PC-9 (cell line): ENCODE measurements at regions of chr20 and their contacts with region 1.

Region 1: DNA sequence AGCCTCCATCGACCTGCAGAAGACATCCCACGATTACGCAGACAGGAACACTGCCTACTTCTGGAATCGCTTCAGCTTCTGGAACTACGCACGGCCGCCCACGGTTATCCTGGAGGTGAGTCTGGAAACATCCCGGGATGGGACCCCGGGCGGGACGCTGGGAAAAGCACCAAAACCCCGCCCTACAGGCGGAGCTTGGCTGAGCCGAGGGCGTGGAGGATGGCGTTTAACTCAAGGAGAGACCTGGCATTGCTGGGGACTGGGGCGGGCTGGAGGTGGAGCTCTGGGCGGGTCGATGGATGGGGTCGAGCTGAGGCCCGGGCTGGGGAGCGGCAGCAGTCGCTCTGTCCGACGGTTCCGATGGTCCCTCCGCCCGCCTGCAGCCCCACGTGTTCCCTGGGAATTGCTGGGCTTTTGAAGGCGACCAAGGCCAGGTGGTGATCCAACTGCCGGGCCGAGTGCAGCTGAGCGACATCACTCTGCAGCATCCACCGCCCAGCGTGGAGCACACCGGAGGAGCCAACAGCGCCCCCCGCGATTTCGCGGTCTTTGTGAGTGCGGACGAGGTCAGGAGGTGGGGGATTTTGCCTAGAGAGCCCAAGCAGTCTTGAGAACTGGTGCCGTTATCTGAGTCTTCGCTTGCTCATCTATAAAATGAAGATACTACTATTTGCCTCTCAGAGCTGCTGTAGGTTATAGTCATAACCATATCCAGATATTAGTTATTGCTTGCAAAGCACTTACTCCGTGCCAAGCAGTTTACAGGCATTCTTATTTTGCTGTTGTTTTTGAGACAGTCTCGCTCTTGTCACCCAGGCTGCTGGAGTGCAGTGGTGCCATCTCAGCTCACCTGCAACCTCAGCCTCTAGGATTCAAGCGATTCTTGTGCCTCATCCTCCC is 3.8 kb downstream of the SPAG4 start:
- DNase-seq: peak; percentile 73 to 92
- H3K4me3 ChIP-seq: peak overlapping the region; percentile 61
- H3K27ac ChIP-seq: no peak overlapping the region
- H3K4me1 ChIP-seq: peaks cover 22% of the 10 kb centered on the region
- H3K27me3 ChIP-seq: no peaks in the 10 kb centered on the region
- CTCF ChIP-seq: peak; percentile 65; the same call in 1 of the 2 replicates

Region 2: GRCh38 chr20:35511814-35512420 is 107.5 kb before region 1 on chr20:
- CTCF ChIA-PET with region 1: interaction called, 3 read pairs
- POLR2A ChIA-PET with region 1: no interaction called
- intact Hi-C with region 1: loop called (anchors 1 kb)
- DNase-seq: peak in 1 of 2 experiments; percentile 56
- H3K4me3 ChIP-seq: no peak overlapping the region
- H3K27ac ChIP-seq: no peak overlapping the region
- H3K4me1 ChIP-seq: peaks cover 28% of the 10 kb centered on the region
- H3K27me3 ChIP-seq: no peaks in the 10 kb centered on the region
- CTCF ChIP-seq: peak; percentile 86

Region 3: GRCh38 chr20:35568645-35569262 is 50.7 kb before region 1 on chr20:
- CTCF ChIA-PET with region 1: interaction called, 7 read pairs
- POLR2A ChIA-PET with region 1: interaction called, 11 read pairs
- intact Hi-C with region 1: loop called (anchors 2 kb)
- DNase-seq: peak; percentile 26 to 55
- H3K4me3 ChIP-seq: no peak overlapping the region
- H3K27ac ChIP-seq: no peak overlapping the region
- H3K4me1 ChIP-seq: no peaks in the 10 kb centered on the region
- H3K27me3 ChIP-seq: no peaks in the 10 kb centered on the region
- CTCF ChIP-seq: peak; percentile 56

Region 4: GRCh38 chr20:35607003-35607750 is 12.3 kb before region 1 on chr20:
- CTCF ChIA-PET with region 1: interaction called, 4 read pairs
- POLR2A ChIA-PET with region 1: interaction called, 24 read pairs
- intact Hi-C with region 1: no loop called
- DNase-seq: peak; percentile 88 to 90
- H3K4me3 ChIP-seq: peak overlapping the region; percentile 57; the same call in 1 of the 2 replicates
- H3K27ac ChIP-seq: peak overlapping the region; percentile 57
- H3K4me1 ChIP-seq: peaks cover 39% of the 10 kb centered on the region
- H3K27me3 ChIP-seq: no peaks in the 10 kb centered on the region
- CTCF ChIP-seq: no peak

Region 5: GRCh38 chr20:35664544-35665221 is 45.2 kb after region 1 on chr20 and contains the starts of genes CPNE1 and RBM12:
- CTCF ChIA-PET with region 1: interaction called, 4 read pairs
- POLR2A ChIA-PET with region 1: interaction called, 23 read pairs
- intact Hi-C with region 1: loop called (anchors 2 kb)
- DNase-seq: peak; percentile 80 to 94
- H3K4me3 ChIP-seq: peak within 1 kb of the TSS; percentile 99
- H3K27ac ChIP-seq: peak within 1 kb of the TSS; percentile 86
- H3K4me1 ChIP-seq: peaks cover 37% of the 10 kb centered on the region
- H3K27me3 ChIP-seq: no peaks in the 10 kb centered on the region
- CTCF ChIP-seq: no peak
- total RNA-seq, gene CPNE1: 271 and 311 TPM in 2 replicates
- total RNA-seq, gene RBM12: 46.9 and 81.2 TPM in 2 replicates

Region 6: GRCh38 chr20:35726759-35727711 is 107.6 kb after region 1 on chr20:
- CTCF ChIA-PET with region 1: no interaction called
- POLR2A ChIA-PET with region 1: interaction called, 12 read pairs
- intact Hi-C with region 1: no loop called
- DNase-seq: no peak
- H3K4me3 ChIP-seq: no peak overlapping the region
- H3K27ac ChIP-seq: no peak overlapping the region
- H3K4me1 ChIP-seq: 0 out of 2 replicates have a peak, but pooled peaks cover 4% of the 10 kb centered on the region
- H3K27me3 ChIP-seq: no peaks in the 10 kb centered on the region
- CTCF ChIP-seq: no peak